GM12878 (cell line): ENCODE measurements at regions of chr3 and their contacts with region 1.

Region 1: GRCh38 chr3:120067090-120067489 is 27.2 kb downstream of the GSK3B start:
- DNase-seq: no peak
- ATAC-seq: no peak
- H3K4me3 ChIP-seq: no peak overlapping the region
- H3K27ac ChIP-seq: no peak overlapping the region
- H3K4me1 ChIP-seq: no peaks in the 10 kb centered on the region
- H3K27me3 ChIP-seq: no peaks in the 10 kb centered on the region
- CTCF ChIP-seq: no peak
- EP300 ChIP-seq: no peak
- POLR2A ChIP-seq: no peak
- RAD21 ChIP-seq: no peak

Region 2: DNA sequence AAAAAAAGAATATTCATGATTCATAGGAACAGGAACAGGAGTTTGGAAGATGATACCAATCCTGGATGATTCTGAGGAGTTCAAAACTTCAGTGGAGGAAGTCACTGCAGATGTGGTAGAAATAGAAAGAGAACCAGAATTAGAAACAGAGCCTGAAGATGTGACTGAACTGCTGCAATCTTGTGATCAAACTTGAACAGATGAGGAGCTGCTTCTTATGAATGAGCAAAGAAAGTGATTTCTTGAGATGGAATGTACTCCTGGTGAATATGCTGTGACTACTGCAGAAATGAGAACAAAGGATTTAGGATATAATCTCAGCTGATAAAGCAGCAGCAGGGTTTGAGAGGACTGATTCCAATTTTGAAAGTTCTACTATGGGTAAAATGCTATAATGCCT is 45.6 kb before region 1 on chr3:
- CTCF ChIA-PET with region 1: no interaction called
- POLR2A ChIA-PET with region 1: no interaction called
- RAD21 ChIA-PET with region 1: no interaction called
- SMC1A ChIA-PET with region 1: no interaction called
- in situ Hi-C with region 1: no loop called
- intact Hi-C with region 1: no loop called
- DNase-seq: no peak
- ATAC-seq: no peak
- H3K4me3 ChIP-seq: no peak overlapping the region
- H3K27ac ChIP-seq: no peak overlapping the region; the same call in 1 of the 2 replicates
- H3K4me1 ChIP-seq: peaks cover 13% of the 10 kb centered on the region
- H3K27me3 ChIP-seq: no peaks in the 10 kb centered on the region
- CTCF ChIP-seq: no peak
- EP300 ChIP-seq: no peak
- POLR2A ChIP-seq: no peak
- RAD21 ChIP-seq: no peak

Region 3: DNA sequence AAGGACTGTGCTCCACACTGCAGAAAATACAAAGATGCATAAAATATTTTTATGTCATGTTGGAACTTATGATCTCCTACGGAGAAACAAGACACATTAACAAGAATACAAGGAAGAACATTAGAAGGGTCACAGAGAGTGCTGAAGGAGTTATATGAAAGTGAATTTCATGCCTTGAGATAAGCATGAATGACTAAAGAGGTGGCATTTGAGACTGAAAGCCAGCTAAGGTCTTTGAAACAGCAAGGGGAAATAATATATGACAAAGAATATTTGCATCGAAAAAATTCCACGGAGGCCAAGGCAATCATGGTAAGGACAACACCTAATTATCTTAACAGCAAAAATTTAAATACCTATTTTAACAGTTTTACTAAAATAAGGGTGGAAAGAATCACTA is 14.6 kb after region 1 on chr3:
- CTCF ChIA-PET with region 1: no interaction called
- POLR2A ChIA-PET with region 1: interaction called, 4 read pairs
- RAD21 ChIA-PET with region 1: interaction called, 3 read pairs
- SMC1A ChIA-PET with region 1: interaction called, 15 read pairs
- in situ Hi-C with region 1: no loop called
- intact Hi-C with region 1: no loop called
- DNase-seq: no peak
- ATAC-seq: peak; percentile 60
- H3K4me3 ChIP-seq: no peak overlapping the region
- H3K27ac ChIP-seq: 0 out of 2 replicates have a peak overlapping the region, but pooled peaks have one; percentile 18
- H3K4me1 ChIP-seq: peaks cover 3% of the 10 kb centered on the region; the same call in 1 of the 2 replicates
- H3K27me3 ChIP-seq: no peaks in the 10 kb centered on the region
- CTCF ChIP-seq: no peak
- EP300 ChIP-seq: no peak
- POLR2A ChIP-seq: no peak
- RAD21 ChIP-seq: no peak